HAP-1 (cell line): ENCODE measurements at regions of chr15 and their contacts with region 1.

Region 1: DNA sequence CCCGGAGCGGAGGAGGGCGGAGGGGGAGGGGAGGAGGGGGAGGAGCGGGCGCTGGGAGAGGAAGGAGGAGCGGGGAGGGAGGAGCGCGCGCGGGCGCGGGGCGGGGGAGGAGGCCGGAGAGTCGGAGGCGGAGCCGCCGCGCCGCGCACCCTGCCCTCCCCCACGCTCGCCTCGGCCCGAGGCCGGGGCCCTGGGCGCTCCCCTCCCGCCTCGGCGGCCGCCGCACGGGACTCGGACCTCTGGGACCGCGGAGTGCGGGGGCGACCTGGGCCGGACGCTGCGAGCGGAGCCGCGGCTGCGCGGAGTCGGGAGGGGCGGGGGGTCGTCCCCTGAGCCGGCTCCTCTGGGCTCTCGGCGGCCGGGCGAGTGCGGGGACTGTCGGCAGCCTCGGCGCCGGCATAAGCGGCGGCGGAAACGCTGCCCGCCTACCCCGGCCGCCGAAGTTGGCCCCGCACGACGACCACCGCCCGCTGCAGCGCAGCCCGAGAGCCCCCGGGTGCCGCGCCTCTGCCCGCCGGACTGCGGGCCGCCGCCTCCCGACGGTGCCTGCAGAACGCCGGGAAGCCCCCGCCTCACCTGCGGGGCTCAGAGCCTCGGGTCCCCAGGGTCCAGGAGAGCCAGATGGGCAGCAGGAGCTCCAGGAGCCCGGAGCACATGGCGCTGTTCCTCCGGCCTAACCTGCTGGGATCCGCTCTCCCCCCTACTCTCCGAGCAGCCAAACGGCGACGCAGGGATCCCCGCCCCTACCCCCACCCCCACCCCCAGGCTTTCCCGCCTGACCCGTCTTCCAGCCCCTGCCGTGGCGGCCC is 407 bp upstream of the GABRB3 start:
- DNase-seq: peak; percentile 70 to 93
- H3K4me3 ChIP-seq: peak overlapping the region; percentile 45
- H3K4me1 ChIP-seq: peaks cover 23% of the 10 kb centered on the region
- H3K27me3 ChIP-seq: no peaks in the 10 kb centered on the region

Region 2: DNA sequence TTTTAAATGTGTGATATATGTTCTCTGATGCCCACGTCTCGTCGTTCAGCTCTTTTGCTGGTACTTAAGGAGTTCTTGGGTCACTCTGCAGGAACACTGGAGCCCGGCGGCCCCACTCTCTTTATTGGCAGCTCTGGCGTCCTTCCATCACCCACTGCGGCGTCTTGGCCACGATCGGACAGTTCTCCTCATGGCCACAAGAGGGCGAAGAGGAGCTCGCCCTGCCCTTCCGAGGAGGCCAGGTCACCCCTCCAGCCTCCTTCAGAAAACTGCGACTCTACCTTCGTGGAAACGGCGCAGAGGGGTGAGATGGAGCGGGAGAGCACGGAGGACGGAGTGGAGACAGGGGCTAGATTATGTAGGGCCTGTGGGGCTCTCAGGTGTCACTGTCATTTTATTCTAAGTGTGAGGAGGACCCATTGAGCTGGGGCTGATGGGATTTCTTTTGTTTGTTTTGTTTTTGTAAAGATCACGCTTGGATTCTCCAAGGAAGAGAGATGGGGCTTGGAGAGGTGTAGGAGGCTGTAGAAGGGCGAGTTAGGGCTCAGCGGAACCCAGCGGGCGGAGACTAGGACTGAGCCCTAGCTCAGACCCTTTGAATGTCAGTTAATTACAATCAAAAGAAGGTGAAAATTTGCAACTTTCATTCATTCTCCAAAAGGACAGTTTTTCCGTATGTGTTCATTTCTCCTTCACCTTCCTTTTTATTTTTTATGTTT is 65.6 kb after region 1 on chr15:
- in situ Hi-C with region 1: loop called (anchors 10 kb)
- DNase-seq: peak; percentile 33 to 75
- H3K4me3 ChIP-seq: no peak overlapping the region
- H3K4me1 ChIP-seq: no peaks in the 10 kb centered on the region
- H3K27me3 ChIP-seq: no peaks in the 10 kb centered on the region